ENCODE measurements at regions of chr12 and their contacts with region 1.

Region 1: GRCh38 chr12:40032433-40033241 is 73.2 kb downstream of the SLC2A13 start:
- DNase-seq: no peak
- ATAC-seq: 0 out of 3 replicates have a peak, but pooled peaks have one; percentile 18
- H3K4me3 ChIP-seq: no peak overlapping the region
- H3K27ac ChIP-seq: no peak overlapping the region
- H3K4me1 ChIP-seq: no peaks in the 10 kb centered on the region
- H3K27me3 ChIP-seq: no peaks in the 10 kb centered on the region
- CTCF ChIP-seq: no peak
- EP300 ChIP-seq: no peak
- POLR2A ChIP-seq: no peak
- RAD21 ChIP-seq: no peak

Region 2: GRCh38 chr12:39503445-39503844 is 529.2 kb before region 1 on chr12:
- CTCF ChIA-PET with region 1: no interaction called
- POLR2A ChIA-PET with region 1: no interaction called
- RAD21 ChIA-PET with region 1: no interaction called
- SMC1A ChIA-PET with region 1: no interaction called
- in situ Hi-C with region 1: no loop called
- intact Hi-C with region 1: no loop called
- DNase-seq: no peak
- ATAC-seq: 0 out of 3 replicates have a peak, but pooled peaks have one; percentile 39
- H3K4me3 ChIP-seq: no peak overlapping the region
- H3K27ac ChIP-seq: no peak overlapping the region
- H3K4me1 ChIP-seq: no peaks in the 10 kb centered on the region
- H3K27me3 ChIP-seq: no peaks in the 10 kb centered on the region
- CTCF ChIP-seq: no peak
- EP300 ChIP-seq: no peak
- POLR2A ChIP-seq: no peak
- RAD21 ChIP-seq: no peak

Region 3: DNA sequence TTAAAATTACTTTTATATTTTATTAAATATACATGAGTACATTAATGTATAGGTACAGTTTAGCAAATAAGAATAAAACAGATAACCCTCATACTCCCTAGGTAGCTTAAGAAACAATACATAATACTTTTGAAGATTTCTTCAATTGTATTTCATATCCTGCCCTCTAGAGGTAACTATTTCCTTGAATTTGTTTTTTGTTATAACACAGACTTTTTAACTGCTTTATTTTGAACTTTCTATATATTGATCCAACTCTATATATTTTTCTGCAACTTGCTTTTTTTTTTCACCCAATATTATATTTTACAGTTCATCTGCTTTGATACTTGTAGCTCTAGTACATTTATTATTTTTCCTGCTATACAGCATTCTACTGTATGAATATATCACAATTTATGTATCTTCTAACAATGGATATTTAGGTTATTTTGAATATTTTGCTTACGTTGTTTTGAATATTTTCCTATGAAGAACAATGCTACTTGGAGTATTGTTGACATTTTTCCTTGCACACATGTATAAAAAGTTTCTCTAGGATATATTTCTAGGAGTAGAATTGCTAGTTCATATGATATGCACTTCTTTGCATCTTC is 340.3 kb before region 1 on chr12:
- CTCF ChIA-PET with region 1: no interaction called
- POLR2A ChIA-PET with region 1: no interaction called
- RAD21 ChIA-PET with region 1: no interaction called
- SMC1A ChIA-PET with region 1: no interaction called
- in situ Hi-C with region 1: no loop called
- intact Hi-C with region 1: no loop called
- DNase-seq: no peak
- ATAC-seq: peak; percentile 74
- H3K4me3 ChIP-seq: no peak overlapping the region
- H3K27ac ChIP-seq: no peak overlapping the region
- H3K4me1 ChIP-seq: no peaks in the 10 kb centered on the region
- H3K27me3 ChIP-seq: no peaks in the 10 kb centered on the region
- CTCF ChIP-seq: peak in 1 of 3 experiments; percentile 17; a peak in 2 of 6 replicates
- EP300 ChIP-seq: no peak
- POLR2A ChIP-seq: no peak
- RAD21 ChIP-seq: 0 out of 2 replicates have a peak, but pooled peaks have one; percentile 26

Region 4: DNA sequence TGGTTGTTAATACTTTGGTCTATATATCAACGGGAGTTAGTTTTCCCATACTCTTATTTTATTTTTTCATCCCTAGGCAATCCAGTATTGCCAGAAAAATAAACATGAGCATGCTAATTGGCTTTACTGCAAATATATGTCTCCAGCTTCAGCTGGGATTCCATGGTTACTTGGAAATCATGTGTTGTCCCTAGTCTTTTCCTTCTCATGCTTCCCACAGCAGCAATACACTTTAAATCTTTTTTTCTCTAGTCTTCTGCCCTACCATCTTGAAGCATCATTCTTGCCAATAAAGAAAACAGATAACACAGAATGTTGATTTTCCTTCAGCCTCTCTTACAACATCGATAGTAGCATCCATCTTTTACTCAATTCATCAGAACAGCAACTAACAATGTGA is 13.0 kb after region 1 on chr12:
- CTCF ChIA-PET with region 1: no interaction called
- POLR2A ChIA-PET with region 1: interaction called, 4 read pairs
- RAD21 ChIA-PET with region 1: interaction called, 4 read pairs
- SMC1A ChIA-PET with region 1: interaction called, 16 read pairs
- in situ Hi-C with region 1: no loop called
- intact Hi-C with region 1: no loop called
- DNase-seq: no peak
- ATAC-seq: no peak
- H3K4me3 ChIP-seq: no peak overlapping the region
- H3K27ac ChIP-seq: no peak overlapping the region
- H3K4me1 ChIP-seq: no peaks in the 10 kb centered on the region
- H3K27me3 ChIP-seq: no peaks in the 10 kb centered on the region
- CTCF ChIP-seq: no peak
- EP300 ChIP-seq: no peak
- POLR2A ChIP-seq: no peak
- RAD21 ChIP-seq: no peak

Region 5: GRCh38 chr12:40158592-40159111 is 126.0 kb after region 1 on chr12:
- CTCF ChIA-PET with region 1: no interaction called
- POLR2A ChIA-PET with region 1: no interaction called
- RAD21 ChIA-PET with region 1: no interaction called
- SMC1A ChIA-PET with region 1: no interaction called
- in situ Hi-C with region 1: no loop called
- intact Hi-C with region 1: no loop called
- DNase-seq: no peak
- ATAC-seq: peak; percentile 84
- H3K4me3 ChIP-seq: no peak overlapping the region
- H3K27ac ChIP-seq: peak overlapping the region; percentile 53; the same call in 1 of the 2 replicates
- H3K4me1 ChIP-seq: peaks cover 10% of the 10 kb centered on the region
- H3K27me3 ChIP-seq: no peaks in the 10 kb centered on the region
- CTCF ChIP-seq: no peak
- EP300 ChIP-seq: no peak
- POLR2A ChIP-seq: no peak
- RAD21 ChIP-seq: no peak